Mammary epithelial cell (primary cell): ENCODE measurements at regions of chr9 and their contacts with region 1.

Region 1: DNA sequence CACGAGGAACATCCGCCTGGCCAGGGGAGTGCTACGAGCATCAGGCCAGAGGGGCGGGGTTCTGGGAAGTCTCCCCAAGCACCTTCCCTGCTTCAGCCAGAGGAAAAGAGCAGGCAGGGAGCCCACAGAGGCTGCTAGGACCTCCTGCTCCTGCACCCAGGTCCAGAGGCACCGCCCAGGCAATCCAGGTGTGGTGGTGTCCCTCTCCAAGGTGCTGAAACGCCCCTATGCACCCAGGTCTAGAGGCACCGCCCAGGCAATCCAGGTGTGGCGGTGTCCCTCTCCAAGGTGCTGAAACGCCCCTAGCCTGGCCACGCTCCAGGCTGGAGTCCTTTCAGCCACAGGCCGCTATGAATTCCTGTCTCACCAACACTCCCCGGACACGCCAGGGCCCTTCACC is 10.7 kb upstream of the UBAC1 start:
- DNase-seq: peak; percentile 74
- H3K4me3 ChIP-seq: no peak overlapping the region
- H3K27ac ChIP-seq: no peak overlapping the region
- H3K4me1 ChIP-seq: no peaks in the 10 kb centered on the region
- H3K27me3 ChIP-seq: no peaks in the 10 kb centered on the region
- CTCF ChIP-seq: no peak

Region 2: DNA sequence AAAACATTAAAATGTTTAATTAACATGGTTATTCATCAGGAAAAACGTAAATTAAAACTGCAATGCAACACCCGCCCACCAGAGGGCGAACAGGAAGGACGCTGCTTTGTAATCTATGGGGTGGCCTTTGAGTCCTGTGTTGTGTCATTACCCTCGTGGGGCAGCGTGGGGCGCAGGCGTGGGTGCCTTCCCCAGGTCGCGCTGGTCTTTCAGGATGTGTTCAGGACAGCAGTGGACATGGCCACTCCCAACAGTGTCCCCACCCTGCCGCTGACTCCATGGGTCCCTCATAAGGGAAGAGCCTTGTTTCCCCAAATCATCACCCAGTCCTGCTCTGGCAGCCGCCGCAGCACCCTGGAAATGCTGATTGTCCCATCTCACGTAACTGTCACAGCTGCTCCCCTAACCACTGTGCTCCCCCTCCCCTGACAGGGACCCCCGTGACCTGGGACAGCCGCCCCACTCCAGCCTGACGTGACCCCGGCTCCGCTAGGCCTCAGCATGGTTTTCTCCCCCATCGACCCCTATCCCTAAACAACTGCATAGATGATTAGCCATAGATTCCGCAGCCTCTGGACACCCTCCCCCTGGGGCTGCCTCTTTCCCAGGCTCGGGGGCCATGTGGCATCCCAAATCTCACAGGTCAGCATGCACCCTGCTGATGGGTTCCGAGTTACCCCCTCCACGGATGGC is 369.0 kb before region 1 on chr9:
- CTCF ChIA-PET with region 1: no interaction called
- dilution Hi-C with region 1: no loop called
- in situ Hi-C with region 1: no loop called
- intact Hi-C with region 1: loop called (anchors 5 kb)
- DNase-seq: peak; percentile 23
- H3K4me3 ChIP-seq: no peak overlapping the region
- H3K27ac ChIP-seq: no peak overlapping the region
- H3K4me1 ChIP-seq: no peaks in the 10 kb centered on the region
- H3K27me3 ChIP-seq: no peaks in the 10 kb centered on the region
- CTCF ChIP-seq: peak; percentile 70 to 75

Region 3: DNA sequence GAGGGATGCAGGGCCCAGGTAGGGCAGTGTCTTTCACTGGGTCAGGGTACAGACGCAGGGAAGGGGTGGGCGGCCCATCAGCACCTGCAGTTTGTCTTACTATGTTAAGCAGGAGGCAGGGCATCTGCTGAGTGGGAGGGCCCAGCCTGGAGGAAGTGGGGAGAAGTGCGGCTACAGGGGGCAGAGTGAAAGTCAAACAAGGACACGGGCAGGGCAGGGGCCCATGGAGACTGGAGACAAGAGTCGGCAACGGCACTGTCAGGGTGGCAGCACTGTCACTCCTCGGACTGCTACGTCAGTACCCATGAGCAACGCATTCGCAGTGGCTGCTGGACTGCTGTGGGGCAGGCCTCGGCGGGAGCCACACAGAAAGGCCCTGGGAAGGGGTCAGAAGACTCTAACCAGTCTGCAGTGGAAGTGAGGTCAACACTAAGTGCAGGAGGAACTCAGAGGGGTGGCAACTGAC is 84.3 kb before region 1 on chr9:
- CTCF ChIA-PET with region 1: no interaction called
- dilution Hi-C with region 1: loop called (anchors 5 kb)
- in situ Hi-C with region 1: no loop called
- intact Hi-C with region 1: no loop called
- DNase-seq: no peak
- H3K4me3 ChIP-seq: no peak overlapping the region
- H3K27ac ChIP-seq: no peak overlapping the region
- H3K4me1 ChIP-seq: peaks cover 74% of the 10 kb centered on the region
- H3K27me3 ChIP-seq: no peaks in the 10 kb centered on the region
- CTCF ChIP-seq: no peak

Region 4: GRCh38 chr9:136016882-136017812 is 45.3 kb after region 1 on chr9:
- CTCF ChIA-PET with region 1: no interaction called
- dilution Hi-C with region 1: no loop called
- in situ Hi-C with region 1: no loop called
- intact Hi-C with region 1: no loop called
- DNase-seq: no peak
- H3K4me3 ChIP-seq: no peak overlapping the region
- H3K27ac ChIP-seq: no peak overlapping the region
- H3K4me1 ChIP-seq: no peaks in the 10 kb centered on the region
- H3K27me3 ChIP-seq: no peaks in the 10 kb centered on the region
- CTCF ChIP-seq: no peak

Region 5: GRCh38 chr9:136093995-136094881 is 122.3 kb after region 1 on chr9:
- CTCF ChIA-PET with region 1: no interaction called
- dilution Hi-C with region 1: no loop called
- in situ Hi-C with region 1: no loop called
- intact Hi-C with region 1: loop called (anchors 1 kb)
- DNase-seq: peak; percentile 62
- H3K4me3 ChIP-seq: peak overlapping the region; percentile 65 to 77 (median 70)
- H3K27ac ChIP-seq: peak overlapping the region; percentile 33
- H3K4me1 ChIP-seq: peaks cover 35% of the 10 kb centered on the region
- H3K27me3 ChIP-seq: no peaks in the 10 kb centered on the region
- CTCF ChIP-seq: no peak

Region 6: GRCh38 chr9:136109351-136110081 is 137.6 kb after region 1 on chr9:
- CTCF ChIA-PET with region 1: no interaction called
- dilution Hi-C with region 1: loop called (anchors 5 kb)
- in situ Hi-C with region 1: no loop called
- intact Hi-C with region 1: no loop called
- DNase-seq: peak; percentile 90
- H3K4me3 ChIP-seq: peak overlapping the region in 2 of 3 experiments; percentile 6 to 12
- H3K27ac ChIP-seq: no peak overlapping the region
- H3K4me1 ChIP-seq: peaks cover 46% of the 10 kb centered on the region
- H3K27me3 ChIP-seq: no peaks in the 10 kb centered on the region
- CTCF ChIP-seq: peak in 1 of 2 donors; percentile 20

Region 7: GRCh38 chr9:136135326-136136126 is 163.6 kb after region 1 on chr9:
- CTCF ChIA-PET with region 1: no interaction called
- dilution Hi-C with region 1: no loop called
- in situ Hi-C with region 1: no loop called
- intact Hi-C with region 1: no loop called
- DNase-seq: no peak
- H3K4me3 ChIP-seq: no peak overlapping the region
- H3K27ac ChIP-seq: no peak overlapping the region
- H3K4me1 ChIP-seq: peaks cover 18% of the 10 kb centered on the region
- H3K27me3 ChIP-seq: peaks cover 8% of the 10 kb centered on the region
- CTCF ChIP-seq: no peak

Region 8: DNA sequence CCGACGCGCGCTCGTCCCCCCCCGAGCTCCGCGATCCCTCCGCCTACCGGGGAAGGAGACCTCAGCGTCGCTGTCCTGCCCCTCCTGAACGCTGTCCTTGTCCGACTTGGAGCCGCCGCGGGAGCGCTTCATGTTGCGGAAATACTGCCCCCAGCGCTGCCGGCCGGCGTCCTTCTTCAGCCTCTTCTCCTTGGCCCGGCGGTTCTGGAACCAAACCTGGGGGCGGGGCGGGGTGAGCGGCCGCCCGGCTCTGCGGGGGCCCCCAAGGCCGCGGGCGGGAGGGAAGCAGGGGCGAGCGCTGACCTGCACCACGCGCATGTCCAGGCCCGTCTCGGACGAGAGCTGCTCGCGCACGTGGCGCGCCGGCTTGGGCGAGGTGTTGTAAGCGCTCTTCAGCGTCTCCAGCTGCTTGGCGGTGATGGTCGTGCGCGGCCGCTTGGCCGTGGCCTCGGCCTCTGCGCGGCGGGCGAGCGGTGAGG is 226.8 kb after region 1 on chr9:
- CTCF ChIA-PET with region 1: no interaction called
- dilution Hi-C with region 1: no loop called
- in situ Hi-C with region 1: no loop called
- intact Hi-C with region 1: no loop called
- DNase-seq: peak; percentile 64
- H3K4me3 ChIP-seq: no peak overlapping the region
- H3K27ac ChIP-seq: no peak overlapping the region
- H3K4me1 ChIP-seq: peaks cover 13% of the 10 kb centered on the region
- H3K27me3 ChIP-seq: peaks cover 72% of the 10 kb centered on the region
- CTCF ChIP-seq: no peak

Region 9: GRCh38 chr9:136225748-136226679 is 254.1 kb after region 1 on chr9:
- CTCF ChIA-PET with region 1: no interaction called
- dilution Hi-C with region 1: no loop called
- in situ Hi-C with region 1: no loop called
- intact Hi-C with region 1: loop called (anchors 1 kb)
- DNase-seq: peak; percentile 63
- H3K4me3 ChIP-seq: no peak overlapping the region
- H3K27ac ChIP-seq: no peak overlapping the region
- H3K4me1 ChIP-seq: peaks cover 19% of the 10 kb centered on the region
- H3K27me3 ChIP-seq: no peaks in the 10 kb centered on the region
- CTCF ChIP-seq: peak; percentile 97 to 98

Region 10: GRCh38 chr9:136283291-136284235 is 311.7 kb after region 1 on chr9:
- CTCF ChIA-PET with region 1: no interaction called
- dilution Hi-C with region 1: no loop called
- in situ Hi-C with region 1: no loop called
- intact Hi-C with region 1: loop called (anchors 1 kb)
- DNase-seq: peak; percentile 48
- H3K4me3 ChIP-seq: peak overlapping the region in 1 of 3 experiments; percentile 9
- H3K27ac ChIP-seq: no peak overlapping the region
- H3K4me1 ChIP-seq: peaks cover 6% of the 10 kb centered on the region
- H3K27me3 ChIP-seq: no peaks in the 10 kb centered on the region
- CTCF ChIP-seq: peak; percentile 86 to 88